ENCODE measurements at regions of chr10 and their contacts with region 1.

Region 1: DNA sequence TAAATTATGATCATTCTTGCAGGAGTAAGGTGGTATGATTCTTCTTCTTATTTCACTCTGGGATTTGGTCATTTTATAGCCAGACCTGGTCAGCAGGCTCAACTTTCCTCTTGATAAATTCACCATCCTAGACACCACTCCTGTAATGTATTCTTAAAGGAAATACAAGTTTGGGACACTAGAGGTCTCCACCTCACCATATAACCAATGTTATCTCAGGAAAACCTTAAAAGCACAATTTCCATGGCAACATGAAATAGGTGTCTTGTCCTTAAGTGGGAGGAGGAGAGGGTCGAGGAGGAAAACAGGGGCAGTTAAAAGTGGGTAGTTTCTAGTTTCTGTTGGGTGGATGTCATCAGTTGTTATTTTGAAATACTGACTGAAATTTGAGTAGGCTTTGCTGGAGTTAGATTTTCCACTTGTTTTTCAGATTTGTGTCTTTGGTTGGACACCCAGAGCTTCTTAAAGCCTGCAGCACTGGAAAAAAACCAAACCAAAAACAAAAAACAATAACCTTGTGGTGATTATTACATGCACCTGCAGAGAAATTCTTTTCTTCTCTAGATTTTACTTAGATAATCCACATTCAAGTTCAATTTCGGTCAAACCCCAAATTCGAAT is 163.1 kb downstream of the PRKCQ start:
- DNase-seq: no peak
- H3K4me3 ChIP-seq: no peak overlapping the region
- H3K27ac ChIP-seq: no peak overlapping the region
- H3K4me1 ChIP-seq: no peaks in the 10 kb centered on the region
- H3K27me3 ChIP-seq: no peaks in the 10 kb centered on the region
- CTCF ChIP-seq: peak in 3 of 4 experiments; percentile 55 to 68 (median 58)
- EP300 ChIP-seq: no peak
- POLR2A ChIP-seq: no peak

Region 2: DNA sequence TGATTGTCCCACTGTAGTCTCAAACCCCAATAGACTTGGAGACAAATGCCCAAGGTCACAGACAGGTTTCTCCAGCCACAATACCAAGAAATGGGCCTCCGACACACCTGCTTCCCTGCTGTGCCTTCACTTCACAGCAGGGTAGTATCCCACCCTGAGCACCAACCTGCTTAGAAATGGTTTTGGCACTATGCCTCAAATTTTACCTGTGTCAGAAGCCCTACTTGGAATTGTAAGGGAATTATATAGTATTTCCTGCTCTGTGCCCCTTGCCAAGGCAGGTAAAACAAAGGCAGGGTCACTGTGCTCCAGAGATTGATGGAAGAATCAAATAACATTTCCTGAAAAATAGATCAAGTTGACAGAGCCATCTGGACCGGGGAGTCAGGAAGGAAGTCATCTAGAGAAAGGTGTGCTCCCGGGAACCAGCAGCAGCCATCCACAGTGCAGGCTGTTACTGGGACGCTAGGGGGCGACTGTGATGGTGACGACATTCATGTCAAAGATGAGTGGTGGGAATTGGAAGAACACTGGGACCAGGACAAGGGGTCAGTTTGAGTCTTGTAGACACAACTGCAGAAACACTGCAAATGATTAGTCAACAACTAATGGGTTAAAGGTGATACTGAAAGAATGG is 1708.8 kb before region 1 on chr10:
- intact Hi-C with region 1: no loop called
- DNase-seq: no peak
- H3K4me3 ChIP-seq: no peak overlapping the region
- H3K27ac ChIP-seq: no peak overlapping the region
- H3K4me1 ChIP-seq: peaks cover 0 to 11% (median 8%) of the 10 kb centered on the region in 4 donors
- H3K27me3 ChIP-seq: no peaks in the 10 kb centered on the region
- CTCF ChIP-seq: no peak
- EP300 ChIP-seq: no peak
- POLR2A ChIP-seq: no peak

Region 3: GRCh38 chr10:6678211-6678803 is 261.3 kb after region 1 on chr10:
- intact Hi-C with region 1: loop called (anchors 5 kb)
- DNase-seq: no peak
- H3K4me3 ChIP-seq: no peak overlapping the region
- H3K27ac ChIP-seq: no peak overlapping the region
- H3K4me1 ChIP-seq: no peaks in the 10 kb centered on the region
- H3K27me3 ChIP-seq: peaks cover 0 to 4% (median 0%) of the 10 kb centered on the region in 3 donors
- CTCF ChIP-seq: peak; percentile 14 to 48 (median 42)
- EP300 ChIP-seq: no peak
- POLR2A ChIP-seq: no peak

Measured in sigmoid colon (tissue), 7 donors.